Dendritic cell treated with granulocyte-macrophage colony-stimulating factor and Interleukin-4, amounts not matched to agents 40 ng/mL and 50 ng/mL, for 4 days (primary cell): ENCODE measurements at regions of chr16 and their contacts with region 1.

Region 1: GRCh38 chr16:75148311-75149195 is at the start of gene ZFP1:
- H3K4me3 Mint-ChIP-seq: peak within 1 kb of the TSS; percentile 82
- H3K27ac Mint-ChIP-seq: peak within 1 kb of the TSS; percentile 79
- H3K4me1 Mint-ChIP-seq: peaks cover 10% of the 10 kb centered on the region
- H3K27me3 Mint-ChIP-seq: peaks cover 5% of the 10 kb centered on the region

Region 2: DNA sequence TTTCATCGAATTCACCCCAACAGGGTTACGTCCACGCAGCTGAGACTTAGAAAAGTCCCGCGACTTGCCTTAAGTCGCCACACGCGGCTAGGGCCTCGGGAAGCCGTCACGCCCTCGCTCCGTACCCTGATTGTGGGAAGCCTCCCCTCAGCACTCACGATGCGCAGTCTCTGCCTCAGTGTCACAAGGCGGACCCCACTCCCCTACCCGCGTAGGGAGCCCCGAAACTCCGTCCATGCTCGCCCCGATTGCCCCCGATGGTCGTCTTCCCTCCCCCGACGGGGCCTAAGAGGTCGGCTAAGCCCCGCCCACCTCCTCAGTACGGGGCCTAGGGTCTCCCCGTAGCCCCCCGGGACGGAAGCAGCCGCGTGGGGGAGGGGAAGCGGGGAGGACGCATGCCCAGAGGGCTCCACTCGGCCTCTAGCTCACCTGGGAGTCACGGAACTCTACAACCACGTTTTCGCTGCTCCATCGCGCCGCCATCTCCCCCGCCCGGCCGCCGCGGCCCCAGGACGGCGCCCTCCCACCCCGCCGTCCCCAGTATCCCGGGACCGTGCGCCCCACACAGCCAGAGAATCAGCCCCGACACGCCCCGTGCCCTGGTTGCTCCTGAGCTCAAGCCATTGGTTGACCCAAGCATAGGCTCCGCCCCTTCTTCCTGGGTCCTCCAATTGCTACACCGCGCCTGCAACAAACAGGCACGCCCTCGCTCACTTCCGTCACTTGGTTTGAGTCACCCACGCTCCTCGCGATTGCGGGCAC is 163.8 kb before region 1 on chr16 and contains the start of gene WDR59:
- intact Hi-C with region 1: loop called (anchors 1 kb)
- H3K4me3 Mint-ChIP-seq: peak within 1 kb of the TSS; percentile 82
- H3K27ac Mint-ChIP-seq: peak within 1 kb of the TSS; percentile 82
- H3K4me1 Mint-ChIP-seq: peaks cover 22% of the 10 kb centered on the region
- H3K27me3 Mint-ChIP-seq: peaks cover 3% of the 10 kb centered on the region

Region 3: DNA sequence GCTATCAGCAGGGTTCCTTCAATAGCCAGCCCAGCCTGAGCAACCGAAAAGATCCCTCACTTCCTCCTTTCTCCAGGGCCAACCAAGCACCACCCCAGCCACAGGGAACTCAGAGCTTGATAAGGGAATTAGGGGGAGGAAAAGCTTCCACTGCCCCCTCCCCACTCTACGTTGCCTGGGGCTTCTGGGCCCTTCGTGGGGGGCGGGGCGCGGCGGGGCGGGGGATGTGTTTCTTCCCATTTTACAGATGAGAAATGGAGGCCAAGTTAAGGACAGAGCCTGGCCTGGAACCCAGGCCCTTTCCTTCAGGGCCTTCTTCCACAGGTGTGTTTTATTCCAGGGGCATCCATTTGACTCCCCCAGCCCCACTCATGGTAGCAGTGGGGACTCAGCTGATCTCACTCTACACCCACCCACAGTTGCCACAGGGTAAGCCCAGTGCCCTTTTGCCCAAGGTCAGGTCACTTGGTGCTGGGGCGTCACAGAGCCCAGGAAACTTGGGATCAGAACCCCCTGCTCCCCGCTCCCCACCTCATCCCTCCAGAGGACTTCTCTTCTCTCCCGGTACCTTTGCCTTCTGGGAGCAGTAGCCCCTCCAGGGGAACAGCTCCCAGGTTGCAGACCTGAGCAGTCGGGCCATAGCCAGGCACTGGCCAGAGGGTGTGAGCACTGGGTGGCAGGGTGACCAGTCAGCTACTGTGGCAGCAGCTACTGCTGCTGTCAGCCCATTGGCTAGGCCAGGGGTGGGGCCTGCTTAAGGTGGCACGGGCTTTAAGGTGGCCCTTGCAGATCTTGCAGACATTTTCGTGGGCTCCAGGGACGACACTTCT is 32.3 kb before region 1 on chr16 and contains the start of gene LDHD:
- intact Hi-C with region 1: loop called (anchors 2 kb)
- H3K4me3 Mint-ChIP-seq: peak within 1 kb of the TSS; percentile 86
- H3K27ac Mint-ChIP-seq: peak within 1 kb of the TSS; percentile 81
- H3K4me1 Mint-ChIP-seq: peaks cover 34% of the 10 kb centered on the region
- H3K27me3 Mint-ChIP-seq: peaks cover 33% of the 10 kb centered on the region

Region 4: DNA sequence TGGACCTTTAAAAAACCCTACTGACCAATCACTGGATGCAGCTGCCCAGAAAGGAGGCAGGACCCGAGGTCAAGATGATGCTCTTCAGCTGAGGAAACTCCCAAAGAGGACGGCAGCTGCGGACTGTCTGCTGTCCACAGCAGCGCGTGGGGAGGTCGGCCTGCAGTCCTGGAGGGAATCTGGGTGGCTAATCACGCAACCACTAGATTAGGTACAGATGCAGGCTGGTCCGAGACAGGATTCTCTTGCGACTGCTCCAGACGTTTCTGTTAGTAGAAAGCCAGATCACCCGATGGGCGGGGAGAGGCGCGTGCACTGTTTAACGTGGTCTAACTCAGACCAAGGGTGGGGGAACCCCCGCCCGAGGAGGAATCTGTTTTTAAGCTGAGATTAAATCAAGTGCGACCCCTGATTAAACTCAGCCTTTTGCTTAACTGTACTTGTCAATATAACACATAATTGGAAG is 49.6 kb after region 1 on chr16:
- intact Hi-C with region 1: no loop called
- H3K4me3 Mint-ChIP-seq: no peak overlapping the region
- H3K27ac Mint-ChIP-seq: no peak overlapping the region
- H3K4me1 Mint-ChIP-seq: peaks cover 6% of the 10 kb centered on the region
- H3K27me3 Mint-ChIP-seq: peaks cover 94% of the 10 kb centered on the region